ENCODE measurements at regions of chr1 and their contacts with region 1.

Region 1: GRCh38 chr1:81800695-81801650 is at the start of gene ADGRL2:
- DNase-seq: peak; percentile 88
- H3K4me3 ChIP-seq: peak within 1 kb of the TSS; percentile 91 to 97
- H3K27ac ChIP-seq: peak within 1 kb of the TSS; percentile 92 to 97
- H3K4me1 ChIP-seq: peaks cover 0 to 2% of the 10 kb centered on the region in 2 experiments; a peak in 1 of 4 replicates
- H3K27me3 ChIP-seq: no peaks in the 10 kb centered on the region
- CTCF ChIP-seq: no peak
- EP300 ChIP-seq: peak in 1 of 2 experiments; percentile 58; a peak in 2 of 4 replicates
- RAD21 ChIP-seq: peak; percentile 34
- polyA plus RNA-seq, gene ADGRL2: 40.3 and 52.4 TPM in 2 replicates

Region 2: DNA sequence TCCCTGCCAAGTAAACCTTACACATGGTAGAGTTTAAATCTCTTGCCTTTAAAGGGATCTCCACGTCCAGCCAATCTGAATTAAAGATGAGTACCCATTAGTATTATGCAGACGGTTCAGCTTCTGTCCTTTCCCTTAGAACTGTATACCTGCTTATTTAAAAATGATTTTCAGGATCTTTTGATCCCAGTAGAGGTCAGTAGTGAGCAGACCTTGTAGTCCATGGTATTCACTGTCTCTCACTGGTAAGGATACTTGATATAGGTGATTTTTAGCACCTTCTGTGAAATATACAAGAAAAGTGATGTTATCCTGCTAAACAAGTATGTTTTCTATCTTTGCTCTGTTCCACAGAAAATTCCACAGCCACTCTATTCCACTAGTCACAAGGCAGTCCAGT is 1582.9 kb before region 1 on chr1:
- CTCF ChIA-PET with region 1: interaction called, 10 read pairs
- POLR2A ChIA-PET with region 1: no interaction called
- DNase-seq: peak; percentile 27
- H3K4me3 ChIP-seq: peak overlapping the region in 1 of 2 experiments; percentile 12; a peak in 1 of 4 replicates
- H3K27ac ChIP-seq: peak overlapping the region in 1 of 2 experiments; percentile 67; a peak in 1 of 4 replicates
- H3K4me1 ChIP-seq: no peaks in the 10 kb centered on the region; a peak in 1 of 4 replicates
- H3K27me3 ChIP-seq: no peaks in the 10 kb centered on the region
- CTCF ChIP-seq: peak; percentile 76
- EP300 ChIP-seq: no peak
- RAD21 ChIP-seq: peak; percentile 68

Region 3: DNA sequence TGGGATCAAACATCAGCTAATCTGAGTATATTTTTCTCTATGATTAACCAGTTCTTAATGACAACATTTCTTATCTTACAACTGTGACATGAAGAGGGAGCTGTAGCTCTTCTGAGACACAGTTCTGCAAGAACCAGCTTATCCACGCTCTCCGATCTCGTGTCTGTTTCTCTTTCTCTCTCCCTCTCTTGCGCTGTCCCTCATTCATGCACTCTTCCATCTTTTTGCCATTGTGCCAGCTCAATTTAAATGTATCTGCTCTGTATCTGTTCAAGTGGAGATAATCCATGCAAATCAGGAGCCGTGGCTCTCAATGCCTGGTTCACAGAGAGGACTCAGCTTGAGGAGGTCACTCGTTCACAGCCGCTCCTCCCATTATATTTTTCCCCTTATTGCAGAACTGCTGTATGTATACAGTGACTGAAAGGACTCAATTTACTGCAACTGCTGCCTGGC is 494.9 kb before region 1 on chr1:
- CTCF ChIA-PET with region 1: interaction called, 9 read pairs
- POLR2A ChIA-PET with region 1: interaction called, 26 read pairs
- DNase-seq: peak; percentile 60
- H3K4me3 ChIP-seq: peak overlapping the region; percentile 52 to 62
- H3K27ac ChIP-seq: peak overlapping the region; percentile 13 to 92; a peak in 3 of 4 replicates
- H3K4me1 ChIP-seq: peaks cover 13 to 17% of the 10 kb centered on the region in 2 experiments; a peak in 2 of 4 replicates
- H3K27me3 ChIP-seq: no peaks in the 10 kb centered on the region
- CTCF ChIP-seq: peak; percentile 58
- EP300 ChIP-seq: peak in 1 of 2 experiments; percentile 85; a peak in 1 of 4 replicates
- RAD21 ChIP-seq: peak; percentile 92